Psoas muscle (tissue), 8 donors: ENCODE measurements at regions of chr2 and their contacts with region 1.

Region 1: DNA sequence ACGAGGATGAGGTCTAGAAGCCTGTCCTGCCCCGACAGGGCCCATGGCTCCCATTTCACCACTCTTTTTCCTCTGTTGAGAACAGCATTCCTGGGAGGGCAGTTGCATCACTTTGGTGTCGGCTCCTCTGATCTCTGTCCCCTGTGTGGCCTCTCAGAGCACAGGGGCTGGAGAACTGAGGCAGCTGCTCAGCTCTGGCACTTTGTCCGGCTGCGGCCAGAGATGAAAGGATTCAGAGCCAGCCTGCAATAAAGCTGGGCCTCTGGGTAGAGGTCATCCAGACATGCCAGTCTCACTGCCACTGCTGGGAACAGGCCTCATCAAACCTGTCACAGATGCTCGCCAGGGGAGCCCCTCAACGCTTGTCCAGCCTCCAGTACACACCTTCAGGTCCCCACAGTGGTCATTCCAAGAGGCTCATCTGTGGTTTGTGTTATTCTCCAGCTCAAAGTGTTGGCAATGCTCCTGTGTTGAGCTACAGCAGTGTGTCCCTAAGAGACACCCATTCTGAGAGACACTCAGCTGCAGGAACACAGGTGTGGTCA is 13.1 kb upstream of the ROCK2 start:
- DNase-seq: peak; percentile 75 to 89
- ATAC-seq: peak; percentile 93 to 97 (median 94)
- H3K4me3 ChIP-seq: no peak overlapping the region
- H3K27ac ChIP-seq: peak overlapping the region; percentile 85
- H3K4me1 ChIP-seq: peaks cover 27% of the 10 kb centered on the region
- H3K27me3 ChIP-seq: no peaks in the 10 kb centered on the region
- CTCF ChIP-seq: no peak

Region 2: GRCh38 chr2:11370377-11371091 is 13.0 kb after region 1 on chr2:
- intact Hi-C with region 1: loop called in 1 of 2 experiments (anchors 1 kb)
- DNase-seq: no peak
- ATAC-seq: no peak
- H3K4me3 ChIP-seq: no peak overlapping the region
- H3K27ac ChIP-seq: peak overlapping the region; percentile 86
- H3K4me1 ChIP-seq: peaks cover 75% of the 10 kb centered on the region
- H3K27me3 ChIP-seq: no peaks in the 10 kb centered on the region
- CTCF ChIP-seq: no peak